Left ventricle myocardium superior (tissue), 1 donor: ENCODE measurements at regions of chr13 and their contacts with region 1.

Region 1: DNA sequence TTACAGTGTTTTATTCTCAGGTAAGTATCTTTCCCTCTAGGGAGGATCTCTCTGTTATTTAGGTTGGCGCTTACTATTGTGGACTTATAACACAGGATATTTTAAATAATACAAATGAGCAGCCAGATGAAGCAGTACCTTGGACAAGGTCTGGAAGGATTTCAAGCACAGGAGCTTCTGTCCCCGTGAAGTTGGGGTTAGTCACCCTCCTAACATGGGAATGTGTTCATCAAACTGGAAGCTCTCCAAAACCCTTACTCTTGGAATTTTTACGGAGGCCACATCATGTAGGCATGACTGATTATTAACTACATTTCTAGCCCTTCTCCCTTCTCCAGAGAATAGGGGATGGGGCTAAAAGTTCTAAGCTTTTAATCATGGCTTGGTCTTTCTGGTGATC is 38.3 kb upstream of the SPRY2 start:
- DNase-seq: no peak
- ATAC-seq: no peak

Region 2: DNA sequence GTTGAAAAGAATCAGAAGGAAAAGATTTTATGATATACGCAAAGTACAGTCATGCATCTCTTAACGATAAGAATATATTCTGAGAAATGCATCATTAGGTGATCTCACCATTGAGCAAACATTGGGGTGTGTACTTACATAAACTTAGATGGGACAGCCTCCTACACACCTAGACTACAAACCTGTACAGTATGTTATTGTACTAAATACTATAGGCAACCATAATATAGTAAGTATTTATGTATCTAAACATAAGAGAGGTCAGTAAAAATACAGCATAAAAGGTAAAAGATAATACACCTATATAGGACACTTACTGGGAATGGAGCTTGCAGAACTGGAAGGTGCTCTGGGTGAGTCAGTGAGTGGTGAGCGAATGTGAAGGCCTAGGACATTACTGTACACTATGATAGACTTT is 292.9 kb before region 1 on chr13:
- intact Hi-C with region 1: no loop called
- DNase-seq: no peak
- ATAC-seq: no peak

Region 3: DNA sequence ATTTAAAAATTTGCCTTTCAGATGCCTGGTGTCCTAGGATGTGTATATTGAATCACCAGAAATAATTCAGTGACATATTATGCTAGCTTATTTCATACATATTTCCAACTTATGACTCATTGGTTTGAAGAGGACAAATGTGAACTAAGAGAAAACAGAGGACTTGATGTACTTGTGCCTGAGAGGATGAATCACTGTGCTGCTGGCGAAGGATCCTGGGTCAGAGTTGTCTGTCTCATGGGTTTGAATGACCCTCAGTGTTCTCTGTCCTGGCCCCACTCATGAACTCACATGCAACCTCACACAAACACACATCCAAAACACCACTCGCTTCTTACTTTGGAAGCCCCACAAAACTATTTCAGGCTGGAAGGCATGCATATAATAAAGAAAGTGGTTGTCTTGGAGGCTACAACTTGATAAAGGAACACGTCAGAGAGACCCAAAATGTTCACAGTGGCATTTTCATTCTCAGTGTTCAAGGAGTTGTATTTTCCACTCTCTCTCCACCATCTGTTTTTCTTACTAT is 90.7 kb after region 1 on chr13:
- intact Hi-C with region 1: loop called (anchors 10 kb)
- DNase-seq: peak; percentile 75
- ATAC-seq: peak; percentile 100